CD4-positive, alpha-beta T cell (primary cell): ENCODE measurements at regions of chr19 and their contacts with region 1.

Region 1: DNA sequence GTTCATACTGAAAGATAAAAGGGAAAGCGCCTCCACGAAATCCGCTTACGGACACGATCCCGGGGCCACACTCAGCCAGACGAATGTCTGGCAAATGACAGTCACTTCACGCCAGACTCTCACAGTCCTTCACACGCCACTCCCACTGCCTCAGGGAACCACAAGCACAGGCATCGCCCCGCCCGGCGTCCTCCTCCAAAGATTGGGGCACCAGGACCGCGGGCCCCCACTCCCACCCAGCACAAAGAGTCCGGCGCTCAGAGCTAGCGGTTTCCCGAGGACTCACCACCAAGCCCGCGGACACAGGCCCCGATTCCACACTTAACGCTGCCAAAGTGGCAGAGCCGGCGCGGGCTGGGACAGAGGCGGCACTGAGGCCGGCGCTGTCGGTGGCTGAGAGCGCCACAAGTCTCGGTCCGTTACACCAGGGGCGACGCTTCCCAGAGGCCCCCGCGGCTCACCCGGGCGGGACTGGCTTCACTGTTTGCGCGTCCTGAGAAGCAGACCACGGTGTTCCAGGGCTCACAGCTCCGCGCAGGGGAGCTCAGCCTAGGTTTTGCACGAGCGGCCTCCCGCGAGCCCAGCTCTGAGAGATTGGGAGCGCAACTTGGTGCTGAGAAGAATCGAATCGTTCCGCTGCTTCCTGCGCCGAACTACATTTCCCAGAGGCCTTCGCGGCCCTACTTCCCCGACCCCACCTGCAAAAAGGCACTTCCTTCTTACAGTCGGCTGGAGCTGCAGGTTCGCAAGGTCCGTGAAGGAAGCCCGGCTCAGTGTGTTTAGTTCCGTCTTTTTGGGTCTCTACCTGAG is at the start of gene ZNF569:
- DNase-seq: peak; percentile 81 to 96 (median 86)
- ATAC-seq: peak; percentile 63
- H3K4me3 ChIP-seq: peak within 1 kb of the TSS; percentile 82
- H3K4me3 Mint-ChIP-seq: peak within 1 kb of the TSS; percentile 93
- H3K27ac ChIP-seq: peak within 1 kb of the TSS; percentile 83 to 87
- H3K27ac Mint-ChIP-seq: peak within 1 kb of the TSS; percentile 100
- H3K4me1 ChIP-seq: peaks cover 32% of the 10 kb centered on the region
- H3K4me1 Mint-ChIP-seq: peaks cover 44% of the 10 kb centered on the region
- H3K27me3 ChIP-seq: no peaks in the 10 kb centered on the region
- H3K27me3 Mint-ChIP-seq: no peaks in the 10 kb centered on the region
- CTCF ChIP-seq: no peak
- total RNA-seq, gene ZNF569: 5.0 to 5.2 TPM

Region 2: DNA sequence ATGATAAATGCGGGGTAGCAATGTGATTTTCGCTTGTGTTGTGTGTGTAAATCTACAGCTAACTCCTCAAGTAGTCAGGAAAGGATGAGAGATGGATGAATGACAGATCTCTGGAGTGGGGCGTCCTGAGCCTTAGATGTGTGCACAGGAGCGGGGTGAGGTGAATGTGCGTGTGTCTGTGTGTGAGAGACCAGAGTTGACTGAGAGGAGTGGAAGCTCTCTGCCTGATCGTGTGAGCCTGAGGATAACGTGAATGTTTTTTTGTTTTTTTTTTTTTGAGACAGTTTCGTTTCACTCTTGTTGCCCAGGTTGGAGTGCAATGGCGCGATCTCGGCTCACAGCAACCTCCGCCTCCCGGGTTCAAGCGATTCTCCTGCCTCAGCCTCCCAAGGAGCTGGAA is 801.2 kb before region 1 on chr19:
- CTCF ChIA-PET with region 1: no interaction called
- POLR2A ChIA-PET with region 1: no interaction called
- intact Hi-C with region 1: loop called (anchors 5 kb)
- DNase-seq: no peak
- ATAC-seq: no peak
- H3K4me3 ChIP-seq: peak overlapping the region; percentile 97
- H3K4me3 Mint-ChIP-seq: peak overlapping the region; percentile 98
- H3K27ac ChIP-seq: no peak overlapping the region
- H3K27ac Mint-ChIP-seq: peak overlapping the region; percentile 92
- H3K4me1 ChIP-seq: peaks cover 24% of the 10 kb centered on the region
- H3K4me1 Mint-ChIP-seq: peaks cover 45% of the 10 kb centered on the region
- H3K27me3 ChIP-seq: no peaks in the 10 kb centered on the region
- H3K27me3 Mint-ChIP-seq: no peaks in the 10 kb centered on the region
- CTCF ChIP-seq: no peak

Region 3: DNA sequence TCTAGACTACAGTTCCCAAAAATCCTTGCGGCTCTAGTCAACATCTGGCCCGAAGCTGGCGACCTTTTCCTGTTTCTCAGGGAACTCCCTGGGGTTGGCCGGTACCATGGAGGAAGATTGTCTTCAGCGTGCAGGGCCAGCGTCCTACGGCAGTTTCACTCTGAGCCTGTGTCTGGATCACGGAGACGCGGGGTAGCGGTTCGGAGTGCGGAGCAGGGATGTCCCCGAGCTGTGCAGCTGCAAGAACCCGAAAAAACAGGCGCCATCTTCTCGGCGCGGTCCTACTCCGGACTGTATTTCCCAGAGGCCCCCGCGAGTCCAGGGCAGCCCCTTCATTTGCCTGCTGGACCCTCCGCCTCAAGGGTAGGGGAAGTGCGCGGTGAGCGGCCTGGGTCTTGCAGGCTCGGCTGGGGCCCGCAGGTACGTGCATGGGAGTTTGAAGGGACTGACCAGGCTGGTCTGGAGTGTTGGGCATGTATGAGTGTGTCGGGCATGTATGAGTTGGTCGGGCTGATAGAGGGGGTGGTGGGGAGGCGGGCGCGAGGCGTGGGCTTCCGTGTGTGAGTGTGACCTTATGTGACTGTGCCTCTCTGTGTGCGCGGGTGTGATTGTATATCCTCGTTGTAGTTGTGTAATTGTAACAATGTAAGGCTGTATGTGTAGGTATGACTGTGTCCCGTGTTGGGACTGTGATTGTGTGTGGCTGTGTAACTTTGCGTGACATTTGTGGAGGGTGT is 249.0 kb before region 1 on chr19 and contains the start of gene ZNF383:
- CTCF ChIA-PET with region 1: no interaction called
- POLR2A ChIA-PET with region 1: interaction called, 8 read pairs
- intact Hi-C with region 1: loop called in 1 of 2 experiments (anchors 5 kb)
- DNase-seq: peak; percentile 66 to 90 (median 78)
- ATAC-seq: peak; percentile 81
- H3K4me3 ChIP-seq: peak within 1 kb of the TSS; percentile 94
- H3K4me3 Mint-ChIP-seq: peak within 1 kb of the TSS; percentile 93
- H3K27ac ChIP-seq: peak within 1 kb of the TSS; percentile 81 to 90
- H3K27ac Mint-ChIP-seq: peak within 1 kb of the TSS; percentile 89
- H3K4me1 ChIP-seq: peaks cover 14% of the 10 kb centered on the region
- H3K4me1 Mint-ChIP-seq: peaks cover 42% of the 10 kb centered on the region
- H3K27me3 ChIP-seq: no peaks in the 10 kb centered on the region
- H3K27me3 Mint-ChIP-seq: no peaks in the 10 kb centered on the region
- CTCF ChIP-seq: no peak
- total RNA-seq, gene ZNF383: 13.1 to 15.7 TPM

Region 4: DNA sequence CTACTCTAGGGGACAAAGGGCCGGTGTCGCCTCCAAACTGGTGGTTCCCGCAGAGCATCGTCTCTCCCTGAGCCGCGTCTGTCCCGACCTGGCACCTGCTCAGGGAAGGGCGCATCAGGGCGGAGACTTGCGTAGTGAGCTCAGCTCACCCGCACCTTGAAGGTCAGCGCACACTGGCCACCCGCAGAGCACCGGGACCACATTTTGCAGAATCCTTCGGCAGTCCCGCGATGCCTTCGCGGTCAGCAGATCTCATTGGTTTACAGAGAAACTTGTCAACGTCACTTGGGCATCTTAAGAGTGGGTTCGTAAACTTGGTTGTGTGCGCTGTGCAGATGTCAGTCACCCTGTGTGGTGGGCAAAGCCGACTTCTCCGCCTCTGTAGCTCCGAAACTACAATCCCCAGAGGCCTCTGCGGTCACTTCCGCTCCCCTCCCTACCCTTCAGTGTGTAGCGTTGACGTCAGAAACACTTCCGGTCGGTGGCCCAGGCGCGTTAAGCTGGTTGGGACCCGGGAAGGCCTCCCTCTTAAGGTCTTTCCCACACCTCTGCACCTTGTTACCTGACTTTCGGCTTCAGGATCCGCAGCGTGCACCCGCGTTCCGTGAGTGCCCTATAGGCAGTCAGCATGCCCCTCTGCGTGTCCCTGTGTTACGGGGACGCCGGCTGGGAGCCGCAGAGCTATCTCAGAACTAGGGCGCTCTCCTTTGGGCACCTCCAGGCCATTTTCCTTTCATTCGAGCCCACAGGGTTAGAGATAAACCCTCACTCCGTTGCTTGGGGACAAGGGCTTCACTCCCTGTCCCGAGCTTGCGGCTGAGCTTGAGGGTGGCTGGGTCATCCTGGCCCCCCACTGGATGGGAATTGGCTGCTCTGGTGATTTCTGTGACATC is 132.6 kb before region 1 on chr19:
- CTCF ChIA-PET with region 1: no interaction called
- POLR2A ChIA-PET with region 1: interaction called, 11 read pairs
- intact Hi-C with region 1: loop called (anchors 1 kb)
- DNase-seq: peak; percentile 76 to 96 (median 85)
- ATAC-seq: peak; percentile 99
- H3K4me3 ChIP-seq: peak overlapping the region; percentile 66
- H3K4me3 Mint-ChIP-seq: peak overlapping the region; percentile 92
- H3K27ac ChIP-seq: peak overlapping the region; percentile 54 to 69
- H3K27ac Mint-ChIP-seq: peak overlapping the region; percentile 95
- H3K4me1 ChIP-seq: peaks cover 20% of the 10 kb centered on the region
- H3K4me1 Mint-ChIP-seq: peaks cover 40% of the 10 kb centered on the region
- H3K27me3 ChIP-seq: no peaks in the 10 kb centered on the region
- H3K27me3 Mint-ChIP-seq: no peaks in the 10 kb centered on the region
- CTCF ChIP-seq: no peak

Region 5: GRCh38 chr19:37506387-37507166 is 39.6 kb after region 1 on chr19 and contains the start of gene ZNF793:
- CTCF ChIA-PET with region 1: no interaction called
- POLR2A ChIA-PET with region 1: interaction called, 133 read pairs
- intact Hi-C with region 1: loop called (anchors 1 kb)
- DNase-seq: peak; percentile 68 to 92 (median 78)
- ATAC-seq: peak; percentile 85
- H3K4me3 ChIP-seq: peak within 1 kb of the TSS; percentile 68
- H3K4me3 Mint-ChIP-seq: no peak within 1 kb of the TSS
- H3K27ac ChIP-seq: peak within 1 kb of the TSS; percentile 88 to 92
- H3K27ac Mint-ChIP-seq: no peak within 1 kb of the TSS
- H3K4me1 ChIP-seq: peaks cover 20% of the 10 kb centered on the region
- H3K4me1 Mint-ChIP-seq: no peaks in the 10 kb centered on the region
- H3K27me3 ChIP-seq: no peaks in the 10 kb centered on the region
- H3K27me3 Mint-ChIP-seq: no peaks in the 10 kb centered on the region
- CTCF ChIP-seq: no peak
- total RNA-seq, gene ZNF793: 2.3 TPM

Region 6: GRCh38 chr19:37655689-37656371 is 188.8 kb after region 1 on chr19:
- CTCF ChIA-PET with region 1: no interaction called
- POLR2A ChIA-PET with region 1: interaction called, 4 read pairs
- intact Hi-C with region 1: loop called (anchors 1 to 2 kb)
- DNase-seq: peak; percentile 57 to 91 (median 80)
- ATAC-seq: peak; percentile 77
- H3K4me3 ChIP-seq: peak overlapping the region; percentile 82
- H3K4me3 Mint-ChIP-seq: peak overlapping the region; percentile 99
- H3K27ac ChIP-seq: peak overlapping the region; percentile 83 to 91
- H3K27ac Mint-ChIP-seq: peak overlapping the region; percentile 98
- H3K4me1 ChIP-seq: peaks cover 14% of the 10 kb centered on the region
- H3K4me1 Mint-ChIP-seq: peaks cover 41% of the 10 kb centered on the region
- H3K27me3 ChIP-seq: no peaks in the 10 kb centered on the region
- H3K27me3 Mint-ChIP-seq: no peaks in the 10 kb centered on the region
- CTCF ChIP-seq: no peak

Region 7: DNA sequence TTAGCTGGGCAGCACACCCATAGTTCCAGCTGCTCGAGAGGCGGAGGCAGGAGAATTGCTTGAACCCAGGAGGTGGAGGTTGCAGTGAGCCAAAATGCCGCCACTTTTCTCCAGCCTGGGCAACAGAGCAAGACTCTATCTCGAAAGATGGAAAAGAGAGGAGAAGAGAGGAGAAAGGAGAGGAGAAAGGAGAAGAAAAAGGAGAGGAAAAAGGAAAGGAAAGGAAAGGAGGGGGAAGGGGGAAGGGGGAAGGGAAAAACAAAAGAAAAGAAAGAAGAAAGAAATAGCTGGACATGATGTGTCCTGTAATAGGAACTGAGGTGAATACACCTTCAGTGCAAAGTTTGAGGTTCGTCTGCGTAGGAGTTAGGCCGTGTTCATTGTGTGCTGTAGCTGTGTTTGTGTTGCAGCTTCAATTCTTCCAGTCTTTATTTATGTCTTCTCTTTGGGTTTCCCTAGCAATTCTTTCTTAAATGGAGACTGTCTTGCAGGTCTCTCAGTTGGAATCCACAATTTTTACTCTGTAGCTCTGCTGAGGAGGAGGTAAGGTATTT is 239.1 kb after region 1 on chr19:
- CTCF ChIA-PET with region 1: no interaction called
- POLR2A ChIA-PET with region 1: no interaction called
- intact Hi-C with region 1: no loop called
- DNase-seq: no peak
- ATAC-seq: no peak
- H3K4me3 ChIP-seq: no peak overlapping the region
- H3K4me3 Mint-ChIP-seq: no peak overlapping the region
- H3K27ac ChIP-seq: no peak overlapping the region
- H3K27ac Mint-ChIP-seq: no peak overlapping the region
- H3K4me1 ChIP-seq: no peaks in the 10 kb centered on the region
- H3K4me1 Mint-ChIP-seq: no peaks in the 10 kb centered on the region
- H3K27me3 ChIP-seq: no peaks in the 10 kb centered on the region
- H3K27me3 Mint-ChIP-seq: no peaks in the 10 kb centered on the region
- CTCF ChIP-seq: no peak

Region 8: GRCh38 chr19:37779127-37780005 is 312.4 kb after region 1 on chr19 and contains the start of gene ZNF573:
- CTCF ChIA-PET with region 1: no interaction called
- POLR2A ChIA-PET with region 1: interaction called, 9 read pairs
- intact Hi-C with region 1: loop called (anchors 1 to 5 kb)
- DNase-seq: peak; percentile 62 to 97 (median 77)
- ATAC-seq: peak; percentile 87
- H3K4me3 ChIP-seq: peak within 1 kb of the TSS; percentile 77
- H3K4me3 Mint-ChIP-seq: peak within 1 kb of the TSS; percentile 89
- H3K27ac ChIP-seq: peak within 1 kb of the TSS; percentile 88 to 94
- H3K27ac Mint-ChIP-seq: peak within 1 kb of the TSS; percentile 97
- H3K4me1 ChIP-seq: peaks cover 17% of the 10 kb centered on the region
- H3K4me1 Mint-ChIP-seq: peaks cover 46% of the 10 kb centered on the region
- H3K27me3 ChIP-seq: no peaks in the 10 kb centered on the region
- H3K27me3 Mint-ChIP-seq: no peaks in the 10 kb centered on the region
- CTCF ChIP-seq: no peak
- total RNA-seq, gene ZNF573: 4.6 to 5.0 TPM